ENCODE measurements at regions of chr17 and their contacts with region 1.

Region 1: DNA sequence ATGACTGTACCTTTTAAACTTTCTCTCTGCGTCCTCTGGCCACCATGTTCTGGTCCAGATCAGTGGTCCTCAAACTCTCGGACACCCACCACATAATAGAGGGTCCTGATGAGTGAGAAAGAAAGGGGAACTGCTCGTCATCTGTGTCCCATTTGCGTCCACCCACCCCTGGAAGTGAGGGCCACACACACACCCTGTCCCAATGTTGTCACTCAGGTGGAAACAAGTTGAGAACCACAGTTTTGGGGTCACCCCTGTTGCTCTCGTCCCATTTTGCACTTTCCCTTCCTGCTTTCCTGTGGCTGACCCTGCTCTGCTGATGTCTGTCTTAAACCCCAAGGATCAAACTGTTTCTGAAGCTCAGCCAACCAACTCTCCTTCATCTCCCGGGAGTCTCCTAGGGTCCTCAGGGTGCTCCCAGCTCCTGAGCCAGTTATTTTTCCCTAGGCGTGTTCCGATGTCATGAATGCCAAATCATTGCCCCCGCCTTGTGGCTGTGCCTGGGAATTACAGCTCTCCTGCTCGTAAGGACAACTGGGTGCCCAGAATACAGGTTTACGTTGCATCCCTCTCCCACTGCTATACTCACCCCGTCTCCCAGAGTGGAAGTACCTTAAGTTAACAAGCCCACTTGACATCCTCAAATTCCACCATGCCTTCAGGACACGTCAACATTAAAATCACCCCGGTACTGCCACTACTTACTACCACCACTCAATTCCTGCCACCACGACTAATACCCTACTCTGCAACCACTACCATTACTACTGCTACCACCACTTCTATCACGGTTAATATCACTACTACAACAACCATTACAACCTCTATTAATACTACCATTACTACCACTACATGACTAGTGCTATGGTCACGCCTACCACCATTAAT is 26.0 kb upstream of the HNF1B start:
- DNase-seq: no peak
- H3K4me3 Mint-ChIP-seq: no peak overlapping the region
- H3K27ac Mint-ChIP-seq: no peak overlapping the region
- H3K4me1 Mint-ChIP-seq: peaks cover 63% of the 10 kb centered on the region
- H3K27me3 Mint-ChIP-seq: peaks cover 8% of the 10 kb centered on the region

Region 2: DNA sequence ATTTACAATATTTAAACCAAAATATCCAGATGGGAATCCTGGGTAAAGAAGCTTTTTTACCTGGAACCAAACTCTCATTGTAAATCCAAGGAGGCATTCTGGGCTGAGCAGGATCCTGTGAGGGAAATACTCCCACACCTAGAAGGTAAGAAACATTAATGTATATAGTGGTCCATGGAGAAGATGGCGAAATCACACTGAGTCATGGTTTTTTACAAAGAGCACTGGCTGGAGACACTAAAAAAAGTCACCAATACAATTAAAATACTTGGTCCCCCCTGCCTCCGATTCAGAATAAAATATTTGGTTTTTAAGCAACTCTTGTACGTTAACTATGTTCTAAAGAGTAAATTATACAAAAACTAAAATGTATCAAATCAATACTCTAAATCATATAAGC is 194.6 kb before region 1 on chr17:
- intact Hi-C with region 1: no loop called
- DNase-seq: no peak
- H3K4me3 Mint-ChIP-seq: no peak overlapping the region
- H3K27ac Mint-ChIP-seq: no peak overlapping the region
- H3K4me1 Mint-ChIP-seq: no peaks in the 10 kb centered on the region
- H3K27me3 Mint-ChIP-seq: no peaks in the 10 kb centered on the region

Region 3: DNA sequence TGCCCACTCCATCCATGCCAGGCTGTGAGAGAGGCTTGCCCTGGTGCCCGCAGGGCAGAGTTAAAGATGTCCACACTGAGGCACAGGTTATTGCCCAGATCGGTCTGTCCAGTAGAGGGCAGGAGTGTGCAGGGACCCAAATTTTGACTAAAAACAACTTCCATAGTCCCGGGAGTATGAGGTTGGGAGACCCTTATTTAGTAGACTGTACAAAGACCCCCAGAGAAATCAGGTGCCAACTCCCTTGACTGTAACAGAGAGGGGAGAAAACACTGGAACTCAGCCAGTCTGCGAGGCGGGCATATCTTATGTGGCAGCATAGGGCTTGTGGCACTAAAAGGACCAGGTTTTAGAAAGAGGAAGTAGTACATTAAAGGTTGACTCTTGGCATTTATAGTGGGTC is 69.4 kb before region 1 on chr17:
- intact Hi-C with region 1: loop called (anchors 5 kb)
- DNase-seq: peak; percentile 40
- H3K4me3 Mint-ChIP-seq: peak overlapping the region; percentile 35
- H3K27ac Mint-ChIP-seq: peak overlapping the region; percentile 20
- H3K4me1 Mint-ChIP-seq: peaks cover 41% of the 10 kb centered on the region
- H3K27me3 Mint-ChIP-seq: peaks cover 24% of the 10 kb centered on the region

Region 4: DNA sequence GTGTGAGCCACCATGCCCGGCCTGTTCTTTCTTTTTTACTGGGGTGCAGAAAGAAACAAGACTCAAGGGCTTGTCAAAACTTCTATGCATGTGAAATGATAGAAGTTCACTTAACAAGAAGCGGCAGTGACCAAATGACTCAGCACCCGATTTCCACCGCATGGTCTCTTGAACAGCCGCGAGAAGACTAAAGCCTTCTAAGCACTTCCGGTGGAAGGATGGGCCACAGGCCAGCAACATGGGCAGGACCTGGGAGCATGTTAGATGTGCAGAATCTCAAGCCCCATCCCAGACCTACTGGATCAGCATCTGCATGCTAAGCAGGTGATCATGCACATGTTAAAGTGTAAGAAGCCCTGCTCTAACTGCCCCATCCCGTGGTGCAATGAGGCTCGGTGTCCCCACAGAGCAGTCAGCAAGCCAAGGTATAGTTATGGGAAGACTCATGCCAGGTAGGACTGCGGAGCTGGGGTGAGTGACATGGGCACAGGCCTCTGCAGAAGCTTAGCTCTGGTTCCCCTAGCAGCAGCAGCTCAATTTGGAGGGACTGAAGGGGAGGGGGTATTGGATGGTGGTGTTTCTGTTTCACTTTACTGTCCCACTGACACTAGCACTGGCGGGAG is 62.5 kb after region 1 on chr17:
- intact Hi-C with region 1: loop called (anchors 5 kb)
- DNase-seq: peak; percentile 32
- H3K4me3 Mint-ChIP-seq: peak overlapping the region; percentile 35
- H3K27ac Mint-ChIP-seq: peak overlapping the region; percentile 88
- H3K4me1 Mint-ChIP-seq: peaks cover 42% of the 10 kb centered on the region
- H3K27me3 Mint-ChIP-seq: peaks cover 4% of the 10 kb centered on the region

Region 5: GRCh38 chr17:37848690-37849616 is 78.1 kb after region 1 on chr17:
- intact Hi-C with region 1: loop called (anchors 5 kb)
- DNase-seq: peak; percentile 33
- H3K4me3 Mint-ChIP-seq: peak overlapping the region; percentile 20
- H3K27ac Mint-ChIP-seq: peak overlapping the region; percentile 89
- H3K4me1 Mint-ChIP-seq: peaks cover 34% of the 10 kb centered on the region
- H3K27me3 Mint-ChIP-seq: peaks cover 4% of the 10 kb centered on the region